MCF 10A (cell line): ENCODE measurements at regions of chr12 and their contacts with region 1.

Region 1: GRCh38 chr12:6927379-6928024 is at the start of gene ATN1:
- DNase-seq: peak; percentile 66
- H3K4me3 Mint-ChIP-seq: peak within 1 kb of the TSS; percentile 91
- H3K27ac Mint-ChIP-seq: peak within 1 kb of the TSS; percentile 92
- H3K4me1 Mint-ChIP-seq: peaks cover 69% of the 10 kb centered on the region
- H3K27me3 Mint-ChIP-seq: no peaks in the 10 kb centered on the region
- CTCF ChIP-seq: no peak
- total RNA-seq, gene ATN1: 83.7 and 84.7 TPM in 2 replicates

Region 2: DNA sequence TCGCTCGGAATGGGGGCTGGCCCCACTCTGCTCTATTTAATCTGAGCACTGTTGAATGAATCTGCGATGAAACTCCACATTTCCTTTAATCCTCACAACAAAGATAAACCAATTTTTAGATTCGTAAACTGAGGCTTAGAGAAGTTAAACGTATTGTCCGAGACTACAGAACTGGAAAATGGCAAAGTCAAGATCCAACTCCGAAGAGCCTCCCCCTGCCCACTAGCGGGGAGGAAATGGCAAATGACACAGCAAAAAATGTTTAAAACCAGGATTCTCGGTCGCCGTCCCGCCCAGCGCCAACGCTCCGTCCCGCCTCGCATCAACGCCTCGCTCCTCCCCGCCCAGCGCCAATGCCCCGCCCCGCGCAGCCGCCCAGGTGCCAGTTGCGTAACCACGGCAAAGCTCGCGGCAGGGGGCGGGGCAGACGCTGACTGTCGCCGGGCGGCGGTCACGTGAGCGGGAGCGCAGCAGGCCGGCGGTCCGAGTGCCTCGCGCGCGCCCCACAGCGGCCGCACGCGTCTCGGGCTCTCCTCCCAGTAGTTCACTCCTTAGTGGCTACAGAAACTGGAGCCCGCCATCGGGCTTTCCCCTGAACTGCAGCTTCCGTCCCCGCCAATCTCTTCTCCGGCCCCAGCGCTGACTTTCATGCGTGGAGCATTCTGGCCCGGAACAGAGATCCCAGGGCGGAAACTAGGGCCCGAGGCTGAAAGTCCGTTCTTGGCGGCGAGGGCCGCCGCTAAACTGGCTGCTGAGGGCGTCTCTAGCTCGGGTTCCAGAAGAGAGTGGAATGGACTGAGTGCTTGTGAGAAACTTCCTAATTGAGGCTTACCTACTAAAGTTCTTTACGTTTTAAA is 36.5 kb before region 1 on chr12:
- CTCF ChIA-PET with region 1: interaction called, 22 read pairs
- POLR2A ChIA-PET with region 1: interaction called, 7 read pairs
- intact Hi-C with region 1: no loop called
- DNase-seq: peak; percentile 93
- H3K4me3 Mint-ChIP-seq: peak overlapping the region; percentile 67
- H3K27ac Mint-ChIP-seq: peak overlapping the region; percentile 74
- H3K4me1 Mint-ChIP-seq: no peaks in the 10 kb centered on the region
- H3K27me3 Mint-ChIP-seq: no peaks in the 10 kb centered on the region
- CTCF ChIP-seq: peak; percentile 60

Region 3: DNA sequence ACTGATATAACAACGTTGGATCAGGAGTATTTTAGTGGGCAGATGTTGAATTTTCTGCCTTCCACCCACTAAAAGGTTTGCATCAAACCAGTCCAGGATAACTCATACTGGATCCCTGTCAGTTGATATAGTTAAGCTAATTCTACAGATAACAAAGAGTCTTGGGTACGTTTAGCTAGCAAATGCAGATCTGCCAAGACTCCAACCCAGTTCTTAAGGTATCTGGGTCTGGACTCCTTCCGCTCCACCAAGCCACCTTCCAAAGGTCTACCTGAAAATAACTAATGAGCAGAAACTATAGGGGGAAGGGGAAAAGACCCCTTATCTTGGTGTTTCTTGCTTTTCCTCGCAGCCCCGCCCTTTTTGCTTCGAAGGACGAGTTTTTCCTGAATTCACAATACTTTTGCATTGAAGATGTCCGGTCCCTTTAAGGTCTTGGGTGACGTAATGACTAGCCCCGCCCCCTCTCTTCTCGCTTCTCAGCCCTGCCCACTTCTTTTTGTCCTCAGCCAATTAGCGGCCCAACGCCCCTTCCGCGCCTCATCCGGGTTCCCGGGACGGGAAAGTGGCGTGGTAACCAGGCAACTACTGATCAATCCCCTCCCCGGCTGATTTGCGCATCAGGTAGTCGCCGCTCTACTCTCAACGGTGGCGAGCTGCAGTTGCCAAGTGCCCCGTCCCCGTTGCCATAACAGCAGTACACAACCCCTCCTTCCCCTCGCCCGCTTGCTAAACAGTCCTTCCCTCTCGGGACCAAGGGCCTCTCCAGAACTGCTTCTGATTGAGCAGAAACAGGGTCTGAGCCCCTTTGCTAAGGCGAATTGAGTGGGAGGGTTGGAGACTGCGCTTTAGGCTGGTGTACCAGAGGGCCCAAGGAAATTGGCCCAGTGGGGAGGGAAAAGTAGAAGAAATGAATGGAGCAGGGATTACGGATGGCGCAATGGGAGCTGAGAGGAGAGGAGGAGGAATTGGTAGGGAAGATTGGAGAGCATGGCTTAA is 22.9 kb before region 1 on chr12 and contains the start of gene LRRC23:
- CTCF ChIA-PET with region 1: interaction called, 13 read pairs
- POLR2A ChIA-PET with region 1: interaction called, 16 read pairs
- intact Hi-C with region 1: no loop called
- DNase-seq: peak; percentile 96
- H3K4me3 Mint-ChIP-seq: no peak within 1 kb of the TSS
- H3K27ac Mint-ChIP-seq: no peak within 1 kb of the TSS
- H3K4me1 Mint-ChIP-seq: peaks cover 2% of the 10 kb centered on the region
- H3K27me3 Mint-ChIP-seq: no peaks in the 10 kb centered on the region
- CTCF ChIP-seq: no peak
- total RNA-seq, gene LRRC23: 7.5 and 9.1 TPM in 2 replicates

Region 4: DNA sequence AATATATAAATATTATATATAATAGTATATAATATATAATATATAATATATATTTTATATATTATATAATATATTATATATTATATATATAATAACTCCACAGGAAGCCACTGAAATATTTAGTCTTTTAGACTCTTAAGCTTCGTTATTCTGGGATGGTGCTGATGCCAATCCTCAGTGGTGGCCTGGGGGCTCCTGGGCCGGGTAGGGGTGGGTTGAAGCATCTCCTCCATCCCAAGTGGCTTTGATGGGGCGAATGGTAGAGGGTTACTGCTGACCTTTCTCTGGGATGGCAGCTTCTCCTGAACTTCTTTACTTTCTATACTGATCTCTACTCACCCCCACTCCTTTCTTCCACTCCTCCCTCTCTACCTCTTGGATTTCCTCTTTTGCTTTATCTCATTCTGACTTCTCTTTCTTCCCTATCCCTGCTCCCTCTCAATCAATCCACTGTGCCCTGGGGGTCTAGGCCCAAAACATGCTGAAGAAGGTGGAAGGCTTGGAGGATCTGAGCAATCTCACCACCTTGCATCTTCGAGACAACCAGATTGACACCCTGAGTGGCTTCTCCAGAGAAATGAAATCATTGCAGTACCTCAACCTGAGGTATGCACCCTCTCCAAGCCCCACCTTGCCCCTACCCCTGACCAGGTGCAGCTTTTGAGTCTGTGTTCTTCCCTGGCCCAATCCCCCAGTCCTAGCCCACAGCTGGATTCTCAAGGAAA is 17.9 kb before region 1 on chr12:
- CTCF ChIA-PET with region 1: interaction called, 16 read pairs
- POLR2A ChIA-PET with region 1: interaction called, 16 read pairs
- intact Hi-C with region 1: no loop called
- DNase-seq: no peak
- H3K4me3 Mint-ChIP-seq: no peak overlapping the region
- H3K27ac Mint-ChIP-seq: no peak overlapping the region
- H3K4me1 Mint-ChIP-seq: peaks cover 2% of the 10 kb centered on the region
- H3K27me3 Mint-ChIP-seq: peaks cover 11% of the 10 kb centered on the region
- CTCF ChIP-seq: no peak

Region 5: GRCh38 chr12:6937481-6938297 is 10.2 kb after region 1 on chr12:
- CTCF ChIA-PET with region 1: interaction called, 114 read pairs
- POLR2A ChIA-PET with region 1: interaction called, 167 read pairs
- intact Hi-C with region 1: loop called (anchors 1 kb)
- DNase-seq: peak; percentile 94
- H3K4me3 Mint-ChIP-seq: peak overlapping the region; percentile 71
- H3K27ac Mint-ChIP-seq: peak overlapping the region; percentile 52
- H3K4me1 Mint-ChIP-seq: peaks cover 31% of the 10 kb centered on the region
- H3K27me3 Mint-ChIP-seq: no peaks in the 10 kb centered on the region
- CTCF ChIP-seq: peak; percentile 88

Region 6: DNA sequence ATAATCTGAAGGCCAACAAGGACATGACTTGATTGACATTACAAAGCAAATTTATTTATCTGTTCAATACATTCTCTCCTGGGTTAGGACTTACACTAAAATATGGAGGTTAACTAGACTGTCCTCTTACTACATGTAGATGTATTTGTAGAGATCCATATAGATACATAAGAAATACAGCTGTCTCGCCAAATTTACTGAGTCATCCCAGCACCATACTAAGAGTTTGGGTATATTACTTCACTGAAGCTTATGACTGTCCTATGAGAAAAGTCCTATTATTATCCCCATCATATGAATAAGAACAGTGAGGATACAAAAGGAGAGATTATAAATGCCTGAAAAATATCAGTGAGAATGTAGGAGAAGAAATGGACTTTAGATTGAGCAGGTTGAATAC is 331.6 kb after region 1 on chr12:
- CTCF ChIA-PET with region 1: no interaction called
- POLR2A ChIA-PET with region 1: no interaction called
- intact Hi-C with region 1: no loop called
- DNase-seq: peak; percentile 18
- H3K4me3 Mint-ChIP-seq: no peak overlapping the region
- H3K27ac Mint-ChIP-seq: no peak overlapping the region
- H3K4me1 Mint-ChIP-seq: no peaks in the 10 kb centered on the region
- H3K27me3 Mint-ChIP-seq: no peaks in the 10 kb centered on the region
- CTCF ChIP-seq: no peak

Region 7: GRCh38 chr12:7303230-7303629 is 375.7 kb after region 1 on chr12:
- CTCF ChIA-PET with region 1: no interaction called
- POLR2A ChIA-PET with region 1: no interaction called
- intact Hi-C with region 1: no loop called
- DNase-seq: peak; percentile 54
- H3K4me3 Mint-ChIP-seq: no peak overlapping the region
- H3K27ac Mint-ChIP-seq: no peak overlapping the region
- H3K4me1 Mint-ChIP-seq: no peaks in the 10 kb centered on the region
- H3K27me3 Mint-ChIP-seq: no peaks in the 10 kb centered on the region
- CTCF ChIP-seq: no peak